ENCODE measurements at regions of chr3 and their contacts with region 1.

Region 1: GRCh38 chr3:17865631-17866030 is 123.2 kb upstream of the TBC1D5 start:
- DNase-seq: no peak
- H3K4me3 ChIP-seq: no peak overlapping the region
- H3K27ac ChIP-seq: no peak overlapping the region
- H3K4me1 ChIP-seq: no peaks in the 10 kb centered on the region
- H3K27me3 ChIP-seq: no peaks in the 10 kb centered on the region
- CTCF ChIP-seq: no peak
- EP300 ChIP-seq: no peak
- POLR2A ChIP-seq: no peak

Region 2: DNA sequence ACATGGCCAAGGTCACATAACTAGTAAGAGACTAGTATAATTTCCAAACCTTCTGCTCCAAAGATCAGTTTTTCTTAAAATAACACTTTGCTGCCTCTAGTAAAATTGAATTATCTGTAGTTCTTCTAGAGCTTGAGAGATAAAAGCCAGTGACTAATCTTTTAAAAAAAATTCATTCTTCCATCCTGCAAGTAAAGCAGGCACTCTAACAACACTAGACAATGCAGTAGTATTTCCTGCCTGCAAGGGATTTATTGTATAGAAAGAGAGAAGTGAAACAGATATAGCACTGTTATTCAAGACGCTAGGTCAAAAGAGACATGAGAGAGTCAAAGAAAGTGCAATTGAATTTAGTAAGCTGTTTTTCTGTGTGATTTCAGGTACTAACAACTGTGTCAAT is 36.3 kb after region 1 on chr3:
- intact Hi-C with region 1: loop called in 1 of 4 experiments (anchors 1 kb)
- DNase-seq: no peak
- H3K4me3 ChIP-seq: no peak overlapping the region
- H3K27ac ChIP-seq: no peak overlapping the region
- H3K4me1 ChIP-seq: no peaks in the 10 kb centered on the region
- H3K27me3 ChIP-seq: no peaks in the 10 kb centered on the region
- CTCF ChIP-seq: no peak
- EP300 ChIP-seq: no peak
- POLR2A ChIP-seq: no peak

Measured in ovary (tissue), 10 donors.